ENCODE measurements at regions of chr15 and their contacts with region 1.

Region 1: GRCh38 chr15:99755692-99756409 is 22.6 kb upstream of the LYSMD4 start:
- DNase-seq: no peak
- ATAC-seq: peak; percentile 91 to 98
- H3K4me3 ChIP-seq: no peak overlapping the region
- H3K27ac ChIP-seq: no peak overlapping the region
- H3K4me1 ChIP-seq: no peaks in the 10 kb centered on the region
- H3K27me3 ChIP-seq: no peaks in the 10 kb centered on the region
- CTCF ChIP-seq: peak; percentile 59 to 89 (median 77)
- POLR2A ChIP-seq: no peak

Region 2: GRCh38 chr15:99275525-99276128 is 480.2 kb before region 1 on chr15:
- in situ Hi-C with region 1: loop called (anchors 5 to 10 kb)
- intact Hi-C with region 1: loop called (anchors 2 kb)
- DNase-seq: no peak
- ATAC-seq: peak in 1 of 2 donors; percentile 35
- H3K4me3 ChIP-seq: no peak overlapping the region
- H3K27ac ChIP-seq: no peak overlapping the region
- H3K4me1 ChIP-seq: no peaks in the 10 kb centered on the region
- H3K27me3 ChIP-seq: no peaks in the 10 kb centered on the region
- CTCF ChIP-seq: no peak
- POLR2A ChIP-seq: no peak

Region 3: GRCh38 chr15:99409097-99409473 is 346.8 kb before region 1 on chr15:
- in situ Hi-C with region 1: no loop called
- intact Hi-C with region 1: loop called (anchors 2 kb)
- DNase-seq: peak; percentile 54 to 67
- ATAC-seq: peak; percentile 74 to 91
- H3K4me3 ChIP-seq: no peak overlapping the region
- H3K27ac ChIP-seq: peak overlapping the region in 3 of 4 donors; percentile 4 to 37 (median 32)
- H3K4me1 ChIP-seq: peaks cover 13 to 15% of the 10 kb centered on the region in 2 donors
- H3K27me3 ChIP-seq: no peaks in the 10 kb centered on the region
- CTCF ChIP-seq: peak; percentile 36 to 76 (median 60)
- POLR2A ChIP-seq: no peak

Region 4: GRCh38 chr15:99677540-99678134 is 78.2 kb before region 1 on chr15:
- in situ Hi-C with region 1: no loop called
- intact Hi-C with region 1: no loop called
- DNase-seq: no peak
- ATAC-seq: no peak
- H3K4me3 ChIP-seq: no peak overlapping the region
- H3K27ac ChIP-seq: peak overlapping the region in 3 of 4 donors; percentile 3 to 35 (median 34)
- H3K4me1 ChIP-seq: peaks cover 6 to 10% of the 10 kb centered on the region in 2 donors
- H3K27me3 ChIP-seq: no peaks in the 10 kb centered on the region
- CTCF ChIP-seq: no peak
- POLR2A ChIP-seq: no peak

Region 5: DNA sequence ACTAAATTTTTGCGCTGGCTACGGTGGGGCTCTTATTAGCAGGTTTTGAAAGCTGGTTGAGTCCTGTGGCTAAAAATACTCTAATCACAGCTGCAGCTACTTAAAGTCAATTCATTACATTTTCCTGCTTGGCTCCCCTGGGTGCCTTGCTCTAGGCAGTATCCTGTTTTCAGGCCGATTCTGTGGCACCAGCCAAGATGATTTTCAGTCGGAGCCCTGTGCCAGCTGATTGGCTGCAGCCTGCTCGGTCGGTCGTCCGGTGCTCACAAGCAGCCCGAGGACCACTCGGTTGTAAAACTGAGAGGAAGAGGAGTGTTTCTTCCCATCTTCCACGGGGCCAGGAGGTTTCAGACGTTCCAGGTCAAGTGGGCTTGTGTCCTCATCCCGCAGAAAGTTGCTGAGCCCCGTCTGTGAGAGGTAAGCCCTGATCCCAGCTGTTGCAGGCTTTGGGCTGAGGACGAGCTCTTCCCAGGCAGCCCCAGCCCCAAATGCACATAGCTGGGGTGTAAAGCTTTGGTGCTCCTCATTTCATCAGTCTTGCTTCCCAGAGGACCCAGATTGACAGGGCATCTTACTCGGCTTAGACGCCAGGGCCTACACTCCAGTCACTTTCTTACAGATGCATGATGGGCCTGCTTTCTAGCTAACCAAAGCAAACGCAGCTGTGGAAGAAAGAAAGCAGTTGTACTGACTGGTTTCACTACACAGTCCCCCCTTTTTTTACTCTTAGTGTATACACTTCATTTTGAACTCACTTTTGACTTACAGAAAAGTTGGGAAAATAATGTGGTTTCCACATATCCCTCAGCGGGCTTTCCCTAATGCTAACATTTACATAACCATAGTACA is 38.5 kb before region 1 on chr15:
- in situ Hi-C with region 1: no loop called
- intact Hi-C with region 1: no loop called
- DNase-seq: no peak
- ATAC-seq: peak; percentile 14 to 25
- H3K4me3 ChIP-seq: peak overlapping the region in 2 of 4 donors; percentile 16 to 28
- H3K27ac ChIP-seq: peak overlapping the region; percentile 63 to 76 (median 66)
- H3K4me1 ChIP-seq: peaks cover 52 to 59% of the 10 kb centered on the region in 2 donors
- H3K27me3 ChIP-seq: no peaks in the 10 kb centered on the region
- CTCF ChIP-seq: no peak
- POLR2A ChIP-seq: no peak